Endothelial cell of umbilical vein (primary cell): ENCODE measurements at regions of chr1 and their contacts with region 1.

Region 1: GRCh38 chr1:62906428-62906886 is 122.5 kb downstream of the ATG4C start:
- DNase-seq: peak; percentile 5
- H3K4me3 ChIP-seq: no peak overlapping the region
- H3K27ac ChIP-seq: no peak overlapping the region
- H3K4me1 ChIP-seq: no peaks in the 10 kb centered on the region
- H3K27me3 ChIP-seq: peaks cover 1 to 6% of the 10 kb centered on the region in 2 experiments
- CTCF ChIP-seq: peak; percentile 44 to 45
- POLR2A ChIP-seq: no peak

Region 2: DNA sequence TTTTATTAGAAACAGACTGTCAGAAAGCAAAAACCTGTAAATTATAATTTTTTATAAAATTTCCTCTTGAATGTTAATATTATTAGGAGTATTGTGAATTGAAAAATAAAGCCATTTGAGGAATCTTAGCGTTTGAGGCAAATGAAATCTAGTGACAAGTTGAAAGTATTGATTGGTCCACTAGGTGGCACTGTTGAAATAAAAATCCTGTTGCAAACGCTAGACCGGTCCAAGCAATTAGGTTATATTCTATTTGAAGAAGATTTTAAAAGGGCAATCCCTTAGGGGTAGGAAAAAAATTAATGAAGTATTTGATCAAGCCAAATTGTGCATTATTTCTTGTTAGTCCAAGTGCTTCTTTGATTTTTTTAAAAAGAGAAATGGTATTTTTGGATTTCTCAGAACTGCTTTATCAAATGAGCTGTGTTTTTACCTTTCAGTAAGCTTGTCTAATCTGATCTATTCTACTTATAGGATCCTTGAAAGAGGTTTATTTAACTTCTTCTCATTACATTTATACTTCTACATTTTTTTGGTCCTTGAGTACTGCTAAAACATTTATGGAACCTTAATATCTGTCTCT is 64.8 kb before region 1 on chr1:
- CTCF ChIA-PET with region 1: interaction called, 73 read pairs
- POLR2A ChIA-PET with region 1: no interaction called
- dilution Hi-C with region 1: no loop called
- intact Hi-C with region 1: loop called (anchors 1 kb)
- DNase-seq: peak; percentile 70
- H3K4me3 ChIP-seq: no peak overlapping the region
- H3K27ac ChIP-seq: no peak overlapping the region
- H3K4me1 ChIP-seq: no peaks in the 10 kb centered on the region
- H3K27me3 ChIP-seq: no peaks in the 10 kb centered on the region
- CTCF ChIP-seq: peak; percentile 35 to 37
- POLR2A ChIP-seq: no peak

Region 3: GRCh38 chr1:62917314-62917713 is 10.9 kb after region 1 on chr1:
- CTCF ChIA-PET with region 1: interaction called, 14 read pairs
- POLR2A ChIA-PET with region 1: no interaction called
- dilution Hi-C with region 1: no loop called
- intact Hi-C with region 1: no loop called
- DNase-seq: no peak
- H3K4me3 ChIP-seq: no peak overlapping the region
- H3K27ac ChIP-seq: no peak overlapping the region
- H3K4me1 ChIP-seq: no peaks in the 10 kb centered on the region
- H3K27me3 ChIP-seq: peaks cover 0 to 5% of the 10 kb centered on the region in 2 experiments
- CTCF ChIP-seq: no peak
- POLR2A ChIP-seq: no peak

Region 4: DNA sequence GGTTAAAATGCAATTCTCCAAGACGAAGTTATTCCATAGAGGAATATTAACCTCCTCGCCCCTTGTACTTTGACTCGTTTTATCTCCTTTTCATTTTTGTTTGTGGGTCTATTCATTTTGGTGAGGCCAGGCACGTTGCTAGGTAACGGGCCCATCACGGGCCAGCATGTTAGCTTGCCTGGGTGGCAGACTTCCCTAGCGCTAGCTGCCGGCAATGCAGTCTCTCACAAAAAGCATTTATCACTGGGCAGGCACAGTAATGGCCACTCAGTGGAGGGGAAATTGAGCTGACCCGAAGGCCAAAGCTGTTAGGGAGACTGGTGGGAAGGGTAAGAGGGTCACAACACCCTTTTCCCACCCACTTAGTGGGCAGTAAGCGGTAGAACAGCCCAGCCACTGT is 181.5 kb after region 1 on chr1:
- CTCF ChIA-PET with region 1: no interaction called
- POLR2A ChIA-PET with region 1: no interaction called
- dilution Hi-C with region 1: no loop called
- intact Hi-C with region 1: no loop called
- DNase-seq: no peak
- H3K4me3 ChIP-seq: no peak overlapping the region
- H3K27ac ChIP-seq: no peak overlapping the region
- H3K4me1 ChIP-seq: no peaks in the 10 kb centered on the region
- H3K27me3 ChIP-seq: peaks cover 0 to 1% of the 10 kb centered on the region in 2 experiments
- CTCF ChIP-seq: no peak
- POLR2A ChIP-seq: no peak